ENCODE measurements at regions of chr2 and their contacts with region 1.

Region 1: DNA sequence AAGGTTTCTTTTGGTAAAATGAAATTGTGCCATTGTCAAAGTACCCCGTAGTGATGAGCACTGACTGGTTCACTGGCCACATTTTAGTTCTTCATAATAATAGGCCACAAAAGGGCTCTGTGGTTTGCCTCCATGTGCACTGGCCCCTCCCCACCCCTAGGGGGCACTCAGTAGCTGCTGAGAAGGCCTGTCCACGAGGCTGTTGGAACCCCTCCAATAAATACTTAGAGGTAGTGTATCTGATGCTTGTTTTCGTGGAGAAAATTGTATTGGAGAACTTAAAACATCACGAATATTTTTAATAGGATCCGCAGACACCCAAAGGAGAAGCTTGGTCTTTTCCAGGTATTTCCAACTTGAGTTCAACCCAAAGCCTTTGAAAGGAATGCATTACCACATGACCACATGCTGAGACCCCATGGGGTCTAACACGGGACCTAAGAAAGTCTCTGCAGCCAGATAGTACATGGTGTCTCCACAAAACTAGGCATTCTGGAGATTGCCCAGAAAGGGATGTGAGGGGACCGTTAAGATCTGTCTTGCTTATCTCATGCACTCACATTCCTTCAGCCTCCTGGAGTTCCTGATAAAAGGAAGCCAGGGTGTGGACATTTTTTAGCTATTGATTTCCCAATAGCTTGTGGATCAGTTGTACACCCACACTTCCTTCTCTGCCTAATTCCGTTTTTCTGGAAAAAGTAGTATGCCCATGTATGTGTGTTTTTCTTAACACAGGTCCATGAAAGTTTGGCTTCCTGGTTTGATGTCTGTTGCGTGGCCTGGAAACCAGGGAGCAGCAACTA is 28.5 kb upstream of the NOSTRIN start:
- DNase-seq: peak; percentile 40
- H3K4me3 ChIP-seq: no peak overlapping the region
- H3K27ac ChIP-seq: no peak overlapping the region
- H3K4me1 ChIP-seq: no peaks in the 10 kb centered on the region
- H3K27me3 ChIP-seq: no peaks in the 10 kb centered on the region
- CTCF ChIP-seq: peak; percentile 88 to 89

Region 2: GRCh38 chr2:168241208-168241607 is 532.7 kb before region 1 on chr2:
- CTCF ChIA-PET with region 1: interaction called, 12 read pairs
- dilution Hi-C with region 1: no loop called
- in situ Hi-C with region 1: no loop called
- intact Hi-C with region 1: no loop called
- DNase-seq: peak; percentile 63
- H3K4me3 ChIP-seq: no peak overlapping the region
- H3K27ac ChIP-seq: no peak overlapping the region
- H3K4me1 ChIP-seq: peaks cover 36% of the 10 kb centered on the region
- H3K27me3 ChIP-seq: no peaks in the 10 kb centered on the region
- CTCF ChIP-seq: no peak

Region 3: DNA sequence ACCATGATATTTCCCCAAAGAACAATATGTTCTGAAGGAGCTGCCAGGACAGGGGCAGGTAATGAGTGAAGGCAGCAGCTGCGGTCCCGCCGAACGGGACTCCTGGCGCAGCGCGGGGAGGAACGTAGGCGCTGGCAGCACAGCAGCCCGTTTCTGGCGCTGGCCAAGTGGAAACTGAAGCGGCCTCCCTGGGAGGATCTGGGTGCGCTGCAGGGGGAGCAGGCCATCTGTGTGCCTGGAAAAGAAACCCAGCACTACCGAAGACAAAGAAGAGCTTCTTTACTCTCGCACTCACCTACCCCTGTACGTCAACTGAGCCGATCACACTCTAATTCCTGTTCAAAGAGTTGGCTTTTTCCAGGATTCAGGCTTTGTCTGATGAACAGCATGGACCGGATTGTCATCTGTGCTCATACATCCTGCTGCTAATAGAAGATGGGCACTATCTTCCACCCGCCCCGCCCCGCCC is 139.0 kb after region 1 on chr2:
- CTCF ChIA-PET with region 1: interaction called, 3 read pairs
- dilution Hi-C with region 1: no loop called
- in situ Hi-C with region 1: loop called (anchors 5 to 10 kb)
- intact Hi-C with region 1: no loop called
- DNase-seq: no peak
- H3K4me3 ChIP-seq: peak overlapping the region in 2 of 3 experiments; percentile 22 to 28
- H3K27ac ChIP-seq: no peak overlapping the region
- H3K4me1 ChIP-seq: no peaks in the 10 kb centered on the region
- H3K27me3 ChIP-seq: peaks cover 1% of the 10 kb centered on the region
- CTCF ChIP-seq: no peak

Region 4: GRCh38 chr2:168920504-168921157 is 146.7 kb after region 1 on chr2:
- CTCF ChIA-PET with region 1: no interaction called
- dilution Hi-C with region 1: no loop called
- in situ Hi-C with region 1: loop called (anchors 5 to 10 kb)
- intact Hi-C with region 1: loop called (anchors 1 kb)
- DNase-seq: no peak
- H3K4me3 ChIP-seq: no peak overlapping the region
- H3K27ac ChIP-seq: no peak overlapping the region
- H3K4me1 ChIP-seq: no peaks in the 10 kb centered on the region
- H3K27me3 ChIP-seq: peaks cover under 1% of the 10 kb centered on the region
- CTCF ChIP-seq: peak; percentile 40 to 52

Measured in mammary epithelial cell (primary cell).